IMR-90 (cell line): ENCODE measurements at regions of chr4 and their contacts with region 1.

Region 1: GRCh38 chr4:28162070-28162469 is 1301.4 kb downstream of the STIM2 start:
- DNase-seq: no peak
- ATAC-seq: no peak
- H3K4me3 ChIP-seq: no peak overlapping the region
- H3K27ac ChIP-seq: no peak overlapping the region
- H3K4me1 ChIP-seq: no peaks in the 10 kb centered on the region
- H3K27me3 ChIP-seq: no peaks in the 10 kb centered on the region
- CTCF ChIP-seq: no peak
- POLR2A ChIP-seq: no peak
- RAD21 ChIP-seq: no peak

Region 2: DNA sequence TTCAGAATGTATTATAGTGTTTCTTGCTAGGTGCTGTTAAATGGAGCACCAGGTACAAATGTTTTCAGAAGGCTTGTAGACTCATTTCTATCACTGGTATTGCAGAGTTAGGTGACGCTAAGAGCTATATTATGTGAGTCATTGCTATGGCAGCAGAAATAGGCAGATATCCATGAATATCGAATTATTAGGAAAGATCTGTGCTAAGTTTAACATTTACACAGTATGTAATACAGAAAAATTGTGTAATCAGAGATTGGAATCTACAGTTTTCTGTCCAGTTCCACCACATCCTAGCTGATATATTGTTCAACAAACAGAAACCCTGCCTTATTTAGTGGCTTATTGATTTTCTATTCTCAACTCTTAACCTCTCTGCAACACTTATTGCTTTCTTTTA is 275.9 kb before region 1 on chr4:
- CTCF ChIA-PET with region 1: no interaction called
- POLR2A ChIA-PET with region 1: no interaction called
- dilution Hi-C with region 1: no loop called
- in situ Hi-C with region 1: no loop called
- intact Hi-C with region 1: loop called (anchors 5 kb)
- DNase-seq: no peak
- ATAC-seq: no peak
- H3K4me3 ChIP-seq: no peak overlapping the region
- H3K27ac ChIP-seq: no peak overlapping the region
- H3K4me1 ChIP-seq: no peaks in the 10 kb centered on the region
- H3K27me3 ChIP-seq: no peaks in the 10 kb centered on the region
- CTCF ChIP-seq: no peak
- POLR2A ChIP-seq: no peak
- RAD21 ChIP-seq: no peak